Activated T-helper 1 cell treated with anti-CD3 and anti-CD28 coated beads, Interleukin-12 subunit alpha, Interleukin-12 subunit beta, Interleukin-2, Interleukin-4 antibody, amounts not matched to agents 30 ng/mL and 10 ng/mL and 1 ng/mL, durations not matched to agents 14 hours and 24 hours and 36 hours (primary cell): ENCODE measurements at regions of chr2 and their contacts with region 1.

Region 1: DNA sequence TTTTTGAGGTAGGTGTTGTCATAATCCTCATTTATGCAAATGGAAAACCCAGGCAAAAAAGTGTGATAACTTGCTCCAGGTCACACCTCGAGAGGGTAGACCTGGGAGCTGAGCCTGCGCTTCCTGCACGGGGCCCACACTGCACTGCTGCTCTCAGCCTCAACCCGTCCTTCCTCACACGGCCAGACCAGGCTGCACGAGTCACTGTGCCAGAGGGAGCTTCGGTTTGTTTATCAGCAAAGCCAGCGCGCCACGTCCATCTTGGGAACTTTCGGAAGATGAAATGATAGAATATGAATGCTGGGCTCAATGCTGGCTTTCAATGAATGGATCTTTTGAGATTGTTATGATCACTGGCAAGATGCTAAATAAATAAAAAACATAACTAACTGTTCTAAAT is 14.4 kb downstream of the COPS9 start:
- DNase-seq: no peak
- H3K4me3 Mint-ChIP-seq: no peak overlapping the region
- H3K27ac Mint-ChIP-seq: no peak overlapping the region
- H3K4me1 Mint-ChIP-seq: peaks cover 6% of the 10 kb centered on the region
- H3K27me3 Mint-ChIP-seq: peaks cover 10% of the 10 kb centered on the region

Region 2: GRCh38 chr2:240077442-240077841 is 44.2 kb before region 1 on chr2:
- intact Hi-C with region 1: loop called (anchors 1 kb)
- DNase-seq: no peak
- H3K4me3 Mint-ChIP-seq: no peak overlapping the region
- H3K27ac Mint-ChIP-seq: no peak overlapping the region
- H3K4me1 Mint-ChIP-seq: no peaks in the 10 kb centered on the region
- H3K27me3 Mint-ChIP-seq: peaks cover 10% of the 10 kb centered on the region

Region 3: GRCh38 chr2:241432824-241433448 is 1311.3 kb after region 1 on chr2:
- intact Hi-C with region 1: no loop called
- DNase-seq: no peak
- H3K4me3 Mint-ChIP-seq: no peak overlapping the region
- H3K27ac Mint-ChIP-seq: no peak overlapping the region
- H3K4me1 Mint-ChIP-seq: no peaks in the 10 kb centered on the region
- H3K27me3 Mint-ChIP-seq: no peaks in the 10 kb centered on the region